ENCODE measurements at regions of chr15 and their contacts with region 1.

Region 1: GRCh38 chr15:65028921-65029735 is at the start of gene MTFMT:
- DNase-seq: peak; percentile 68
- ATAC-seq: peak; percentile 97
- H3K4me3 ChIP-seq: peak within 1 kb of the TSS; percentile 81
- H3K27ac ChIP-seq: peak within 1 kb of the TSS; percentile 66
- H3K4me1 ChIP-seq: peaks cover 2% of the 10 kb centered on the region; the same call in 1 of the 2 replicates
- H3K27me3 ChIP-seq: no peaks in the 10 kb centered on the region
- CTCF ChIP-seq: no peak
- POLR2A ChIP-seq: 0 out of 2 replicates have a peak, but pooled peaks have one; percentile 44
- RAD21 ChIP-seq: no peak
- total RNA-seq, gene MTFMT: 19.4 and 21.3 TPM in 2 replicates

Region 2: GRCh38 chr15:64731012-64731806 is 297.9 kb before region 1 on chr15:
- CTCF ChIA-PET with region 1: no interaction called
- POLR2A ChIA-PET with region 1: no interaction called
- dilution Hi-C with region 1: no loop called
- in situ Hi-C with region 1: no loop called
- intact Hi-C with region 1: loop called (anchors 5 kb)
- DNase-seq: peak; percentile 59
- ATAC-seq: peak; percentile 80
- H3K4me3 ChIP-seq: no peak overlapping the region
- H3K27ac ChIP-seq: no peak overlapping the region
- H3K4me1 ChIP-seq: no peaks in the 10 kb centered on the region
- H3K27me3 ChIP-seq: no peaks in the 10 kb centered on the region
- CTCF ChIP-seq: peak; percentile 92
- POLR2A ChIP-seq: 0 out of 2 replicates have a peak, but pooled peaks have one; percentile 29
- RAD21 ChIP-seq: peak; percentile 96

Region 3: DNA sequence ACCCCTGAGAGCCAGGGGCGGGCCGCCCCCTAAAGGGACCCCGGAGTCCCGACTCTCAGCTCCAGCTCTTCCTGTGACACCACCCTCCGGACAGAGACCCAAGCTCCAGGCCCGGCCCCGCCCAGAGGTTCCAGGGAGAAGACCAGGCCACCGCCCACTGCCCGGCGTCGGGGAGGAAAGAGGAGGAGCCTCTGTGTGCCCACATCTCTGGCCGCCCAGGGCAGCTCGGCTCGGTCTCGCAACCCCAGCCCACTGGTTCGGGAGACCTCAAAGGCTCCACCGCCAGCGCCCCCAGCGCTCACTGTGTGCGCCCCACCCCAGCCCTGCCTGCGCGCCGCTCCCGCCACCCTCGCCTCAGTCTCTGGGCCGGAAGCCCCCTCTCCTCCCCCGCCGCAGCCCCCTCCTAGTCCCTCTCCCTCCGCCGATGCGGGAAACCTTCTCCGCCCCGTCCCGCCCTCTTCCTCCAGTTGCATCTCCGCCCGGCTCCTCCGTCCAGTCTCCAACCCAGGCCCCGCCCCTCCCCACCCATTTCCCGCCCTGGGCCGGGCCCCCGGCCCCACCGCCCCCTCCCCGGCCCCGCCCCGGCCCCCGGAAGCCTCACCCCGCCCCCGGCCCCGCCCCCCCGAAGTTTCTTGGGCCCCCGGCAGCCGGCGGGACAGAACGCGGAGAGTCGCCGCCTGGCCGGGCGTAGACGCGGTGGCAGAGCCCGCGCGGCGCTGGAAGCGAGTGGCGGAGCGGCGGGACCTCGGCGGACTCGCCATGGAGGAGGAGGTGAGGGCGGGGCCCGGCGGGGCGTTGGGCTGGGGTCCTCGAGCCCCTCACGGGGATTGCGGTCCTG is 187.7 kb before region 1 on chr15 and contains the start of gene PLEKHO2:
- CTCF ChIA-PET with region 1: no interaction called
- POLR2A ChIA-PET with region 1: interaction called, 3 read pairs
- dilution Hi-C with region 1: no loop called
- in situ Hi-C with region 1: no loop called
- intact Hi-C with region 1: loop called (anchors 5 kb)
- DNase-seq: peak; percentile 92
- ATAC-seq: peak; percentile 88
- H3K4me3 ChIP-seq: peak within 1 kb of the TSS; percentile 83
- H3K27ac ChIP-seq: peak within 1 kb of the TSS; percentile 92
- H3K4me1 ChIP-seq: peaks cover 17% of the 10 kb centered on the region
- H3K27me3 ChIP-seq: no peaks in the 10 kb centered on the region
- CTCF ChIP-seq: peak; percentile 35; the same call in 1 of the 2 replicates
- POLR2A ChIP-seq: peak; percentile 94
- RAD21 ChIP-seq: no peak; the same call in 1 of the 2 replicates
- total RNA-seq, gene PLEKHO2: 18.6 and 19.0 TPM in 2 replicates

Region 4: GRCh38 chr15:65086017-65086679 is 57.0 kb after region 1 on chr15:
- CTCF ChIA-PET with region 1: interaction called, 21 read pairs
- POLR2A ChIA-PET with region 1: no interaction called
- dilution Hi-C with region 1: no loop called
- in situ Hi-C with region 1: loop called (anchors 10 kb)
- intact Hi-C with region 1: loop called (anchors 1 kb)
- DNase-seq: peak; percentile 16
- ATAC-seq: no peak
- H3K4me3 ChIP-seq: no peak overlapping the region
- H3K27ac ChIP-seq: no peak overlapping the region
- H3K4me1 ChIP-seq: peaks cover 36% of the 10 kb centered on the region
- H3K27me3 ChIP-seq: peaks cover 39% of the 10 kb centered on the region
- CTCF ChIP-seq: peak; percentile 45
- POLR2A ChIP-seq: no peak
- RAD21 ChIP-seq: peak; percentile 40

Region 5: GRCh38 chr15:65101411-65101890 is 72.3 kb after region 1 on chr15:
- CTCF ChIA-PET with region 1: interaction called, 11 read pairs
- POLR2A ChIA-PET with region 1: no interaction called
- dilution Hi-C with region 1: no loop called
- in situ Hi-C with region 1: no loop called
- intact Hi-C with region 1: loop called (anchors 1 kb)
- DNase-seq: peak; percentile 63
- ATAC-seq: peak; percentile 96
- H3K4me3 ChIP-seq: no peak overlapping the region
- H3K27ac ChIP-seq: no peak overlapping the region
- H3K4me1 ChIP-seq: no peaks in the 10 kb centered on the region
- H3K27me3 ChIP-seq: no peaks in the 10 kb centered on the region
- CTCF ChIP-seq: peak; percentile 79
- POLR2A ChIP-seq: no peak
- RAD21 ChIP-seq: peak; percentile 80

Region 6: DNA sequence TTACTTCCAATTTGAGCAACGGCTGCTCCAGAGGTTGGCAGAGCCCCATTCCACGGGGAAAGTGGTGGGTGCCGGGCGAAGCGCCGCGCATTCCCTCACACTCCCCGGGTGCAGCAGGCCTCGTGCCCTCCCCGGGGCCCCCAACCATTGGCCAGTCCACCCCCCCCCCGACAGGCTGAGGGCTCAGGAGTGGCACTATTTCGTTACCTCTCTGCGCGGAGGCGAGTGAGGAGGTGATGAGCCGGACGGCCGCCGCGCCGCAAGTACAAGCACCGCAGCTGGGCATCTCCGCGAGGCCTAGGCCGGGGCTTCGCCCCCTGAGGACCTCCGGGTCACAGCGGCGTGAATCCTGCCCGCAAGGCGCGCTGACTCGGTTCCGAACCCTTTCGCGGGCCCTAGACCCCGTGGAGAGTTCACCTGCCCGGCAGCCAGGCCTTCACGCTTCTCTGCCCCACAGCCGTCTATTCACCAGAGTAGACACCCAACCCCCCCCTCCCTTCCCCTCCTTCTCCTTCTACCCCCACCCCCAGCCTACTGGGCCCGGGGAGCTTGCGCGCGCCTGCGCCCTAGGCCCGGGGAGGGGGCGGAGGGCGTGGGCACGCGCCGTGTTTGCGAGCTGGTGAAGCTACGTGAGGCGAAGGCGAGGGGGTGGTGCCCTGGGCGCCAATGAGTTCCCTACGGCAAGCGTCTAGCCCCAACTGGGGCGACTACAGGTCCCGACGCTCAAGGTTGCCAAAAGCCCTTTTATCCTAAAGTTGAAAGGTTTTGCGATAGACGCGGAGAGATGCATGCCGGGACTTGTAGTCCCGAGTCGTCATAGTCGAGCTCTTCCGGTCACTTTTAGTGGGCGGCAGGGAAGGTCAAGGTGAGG is 156.0 kb after region 1 on chr15 and contains the start of gene CLPX:
- CTCF ChIA-PET with region 1: no interaction called
- POLR2A ChIA-PET with region 1: no interaction called
- dilution Hi-C with region 1: no loop called
- in situ Hi-C with region 1: no loop called
- intact Hi-C with region 1: loop called (anchors 5 kb)
- DNase-seq: peak; percentile 89
- ATAC-seq: peak; percentile 91
- H3K4me3 ChIP-seq: peak within 1 kb of the TSS; percentile 87
- H3K27ac ChIP-seq: peak within 1 kb of the TSS; percentile 94
- H3K4me1 ChIP-seq: no peaks in the 10 kb centered on the region
- H3K27me3 ChIP-seq: no peaks in the 10 kb centered on the region
- CTCF ChIP-seq: no peak
- POLR2A ChIP-seq: peak; percentile 76
- RAD21 ChIP-seq: no peak
- total RNA-seq, gene CLPX: 25.8 and 29.4 TPM in 2 replicates

Region 7: DNA sequence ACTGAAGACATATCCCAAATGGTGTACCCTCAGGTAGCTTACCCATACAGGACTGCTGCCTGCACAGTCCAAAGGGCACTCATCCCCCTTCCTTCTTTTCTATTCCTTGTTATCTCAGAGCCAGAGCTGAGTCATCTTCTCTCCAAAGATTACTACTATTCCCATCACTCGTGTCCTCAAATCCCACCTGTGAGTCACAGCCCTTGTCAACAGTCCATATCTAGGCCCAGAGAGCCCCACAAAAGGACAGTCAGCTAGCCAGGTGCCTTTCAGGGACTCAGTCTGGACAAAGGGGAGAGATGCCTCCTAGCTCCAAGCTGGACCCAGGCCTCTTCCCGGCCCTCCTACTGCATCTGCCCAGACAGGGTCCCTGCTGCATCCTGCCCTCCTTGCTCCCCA is 246.6 kb after region 1 on chr15:
- CTCF ChIA-PET with region 1: no interaction called
- POLR2A ChIA-PET with region 1: no interaction called
- dilution Hi-C with region 1: no loop called
- in situ Hi-C with region 1: loop called (anchors 10 kb)
- intact Hi-C with region 1: loop called (anchors 10 kb)
- DNase-seq: peak; percentile 70
- ATAC-seq: peak; percentile 28; the same call in 1 of the 2 replicates
- H3K4me3 ChIP-seq: no peak overlapping the region
- H3K27ac ChIP-seq: no peak overlapping the region
- H3K4me1 ChIP-seq: peaks cover 6% of the 10 kb centered on the region
- H3K27me3 ChIP-seq: no peaks in the 10 kb centered on the region
- CTCF ChIP-seq: no peak
- POLR2A ChIP-seq: no peak
- RAD21 ChIP-seq: no peak